GM23248 (cell line): ENCODE measurements at regions of chr1 and their contacts with region 1.

Region 1: GRCh38 chr1:84944767-84945486 is 51.9 kb upstream of the LPAR3 start:
- DNase-seq: peak; percentile 91
- H3K4me3 ChIP-seq: peak overlapping the region; percentile 70
- H3K27ac ChIP-seq: peak overlapping the region; percentile 55
- H3K4me1 ChIP-seq: peaks cover 26% of the 10 kb centered on the region
- H3K27me3 ChIP-seq: no peaks in the 10 kb centered on the region

Region 2: DNA sequence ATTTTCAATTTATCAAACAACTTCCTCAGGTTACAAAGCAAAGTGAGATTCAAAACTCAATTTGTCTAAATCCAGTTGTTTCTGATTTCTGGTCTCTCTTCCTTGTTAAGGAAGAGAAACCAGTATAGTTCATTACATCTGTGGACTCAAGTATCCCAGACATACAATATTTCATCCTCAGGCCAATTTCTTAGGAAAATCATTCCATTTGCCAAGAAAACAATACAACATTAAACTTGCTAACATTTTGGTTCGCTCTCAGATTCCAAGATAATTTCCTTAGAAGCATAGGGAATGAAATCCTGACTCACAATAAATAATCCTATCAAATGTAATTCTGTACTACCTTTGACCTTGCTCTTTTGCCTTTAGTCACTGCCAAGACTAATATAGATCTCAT is 934.8 kb before region 1 on chr1:
- in situ Hi-C with region 1: no loop called
- DNase-seq: no peak
- H3K4me3 ChIP-seq: no peak overlapping the region
- H3K27ac ChIP-seq: no peak overlapping the region
- H3K4me1 ChIP-seq: no peaks in the 10 kb centered on the region
- H3K27me3 ChIP-seq: no peaks in the 10 kb centered on the region

Region 3: GRCh38 chr1:84478876-84479868 is 465.8 kb before region 1 on chr1 and contains the start of gene RPF1:
- in situ Hi-C with region 1: loop called (anchors 25 kb)
- DNase-seq: peak; percentile 92
- H3K4me3 ChIP-seq: peak within 1 kb of the TSS; percentile 94
- H3K27ac ChIP-seq: peak within 1 kb of the TSS; percentile 87
- H3K4me1 ChIP-seq: peaks cover 23% of the 10 kb centered on the region
- H3K27me3 ChIP-seq: no peaks in the 10 kb centered on the region
- total RNA-seq, gene RPF1: 18.8 and 33.0 TPM in 2 replicates

Region 4: GRCh38 chr1:84632673-84633434 is 312.1 kb before region 1 on chr1:
- in situ Hi-C with region 1: loop called (anchors 25 kb)
- DNase-seq: peak; percentile 84
- H3K4me3 ChIP-seq: no peak overlapping the region
- H3K27ac ChIP-seq: peak overlapping the region; percentile 20; the same call in 1 of the 2 replicates
- H3K4me1 ChIP-seq: peaks cover 10% of the 10 kb centered on the region
- H3K27me3 ChIP-seq: no peaks in the 10 kb centered on the region

Region 5: DNA sequence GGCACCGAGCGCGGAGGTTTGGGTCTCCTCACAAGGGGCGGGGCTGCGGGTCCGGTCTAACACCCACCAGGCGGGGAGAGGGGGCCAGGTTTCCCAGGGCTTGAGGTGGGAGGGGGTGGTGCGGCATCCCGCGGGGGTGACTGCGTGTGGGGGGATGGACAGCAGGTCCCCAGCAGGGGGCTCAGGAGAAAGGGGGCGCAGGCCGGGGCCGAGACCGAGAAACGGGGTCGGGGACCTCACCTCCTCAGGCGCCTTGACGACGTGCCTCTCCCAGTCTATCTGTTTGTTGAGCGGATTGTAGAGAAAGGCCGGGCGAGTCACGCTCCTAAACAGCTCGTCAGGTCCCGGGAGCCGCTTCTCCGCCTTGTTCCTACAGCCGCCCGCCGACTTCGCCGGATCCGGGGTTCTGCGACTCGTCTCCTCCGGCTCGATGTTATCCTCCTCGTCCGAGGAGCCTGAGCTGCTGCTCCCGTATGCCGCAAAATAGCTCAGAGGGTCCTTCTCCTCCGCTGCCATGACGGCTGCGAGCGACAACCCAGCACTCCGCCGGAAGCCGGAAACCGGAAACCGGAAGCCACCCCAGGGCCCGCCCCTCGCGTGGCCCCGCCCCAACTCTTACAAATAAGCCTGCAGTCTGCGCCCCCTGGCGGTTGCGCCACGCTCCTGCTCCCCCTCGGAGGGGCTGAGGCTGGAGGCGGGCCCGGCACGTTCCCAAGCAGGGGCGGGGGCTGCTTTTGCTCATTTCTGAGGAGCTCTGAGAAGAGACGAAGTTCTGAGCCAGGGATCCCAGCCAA is 314.4 kb after region 1 on chr1 and contains the start of gene C1orf52:
- in situ Hi-C with region 1: loop called (anchors 10 kb)
- DNase-seq: peak; percentile 96
- H3K4me3 ChIP-seq: peak within 1 kb of the TSS; percentile 93
- H3K27ac ChIP-seq: peak within 1 kb of the TSS; percentile 96
- H3K4me1 ChIP-seq: peaks cover 42% of the 10 kb centered on the region
- H3K27me3 ChIP-seq: no peaks in the 10 kb centered on the region
- total RNA-seq, gene C1orf52: 26.7 and 30.9 TPM in 2 replicates

Region 6: DNA sequence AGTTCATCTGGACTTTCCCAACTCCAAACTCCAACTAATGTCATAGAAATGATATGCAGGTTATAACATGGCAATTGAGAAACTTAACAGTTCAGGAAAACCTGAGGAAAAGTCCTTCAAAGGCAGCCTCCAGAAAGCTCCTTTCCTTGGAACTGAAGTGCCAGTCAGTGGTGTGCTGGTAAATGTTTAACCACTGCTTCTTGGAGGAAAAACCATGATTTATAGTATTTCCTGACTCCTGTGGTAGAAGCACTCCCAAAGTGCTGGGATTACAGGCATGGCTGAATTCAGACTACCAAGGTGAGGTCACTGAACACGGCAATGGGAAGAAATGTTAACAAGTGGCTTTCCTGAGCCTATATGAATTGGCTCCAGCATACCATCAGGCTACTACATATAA is 790.0 kb after region 1 on chr1:
- in situ Hi-C with region 1: no loop called
- DNase-seq: no peak
- H3K4me3 ChIP-seq: no peak overlapping the region
- H3K27ac ChIP-seq: no peak overlapping the region
- H3K4me1 ChIP-seq: no peaks in the 10 kb centered on the region
- H3K27me3 ChIP-seq: no peaks in the 10 kb centered on the region